Naive thymus-derived CD4-positive, alpha-beta T cell (primary cell): ENCODE measurements at regions of chr19 and their contacts with region 1.

Region 1: DNA sequence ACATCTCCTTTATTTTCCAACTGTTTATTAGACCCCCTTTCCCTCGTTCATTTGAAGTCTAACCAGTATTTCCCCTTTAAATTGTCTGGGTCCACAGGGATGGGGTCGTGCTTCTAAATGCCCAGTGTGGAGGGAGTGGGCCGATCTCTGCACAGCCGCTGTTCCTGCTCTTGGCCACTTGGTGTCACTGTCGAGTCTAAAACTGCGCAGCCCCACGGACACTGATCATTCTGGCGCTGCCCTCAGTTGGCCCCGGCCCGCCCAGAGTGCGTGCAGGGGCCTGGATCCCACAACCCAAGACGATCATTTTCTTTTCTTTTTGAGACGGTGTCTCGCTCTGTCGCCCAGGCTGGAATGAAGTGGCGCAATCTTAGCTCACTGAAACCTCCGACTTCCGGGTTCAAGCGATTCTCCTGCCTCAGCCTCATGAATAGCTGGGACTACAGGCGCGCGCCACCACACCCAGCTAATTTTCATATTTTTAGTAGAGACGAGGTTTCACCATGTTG is 12.0 kb downstream of the WDR88 start:
- DNase-seq: peak; percentile 21 to 68 (median 49)
- ATAC-seq: peak; percentile 98
- H3K4me3 ChIP-seq: no peak overlapping the region
- H3K4me3 Mint-ChIP-seq: peak overlapping the region in 6 of 10 donors; percentile 0 to 58 (median 30)
- H3K27ac ChIP-seq: no peak overlapping the region
- H3K27ac Mint-ChIP-seq: no peak overlapping the region
- H3K4me1 ChIP-seq: no peaks in the 10 kb centered on the region
- H3K4me1 Mint-ChIP-seq: peaks cover 4 to 9% (median 8%) of the 10 kb centered on the region in 7 donors
- H3K27me3 ChIP-seq: no peaks in the 10 kb centered on the region
- H3K27me3 Mint-ChIP-seq: peaks cover 0 to 8% (median 3%) of the 10 kb centered on the region in 5 donors

Region 2: GRCh38 chr19:33005420-33005819 is 138.5 kb before region 1 on chr19:
- CTCF ChIA-PET with region 1: no interaction called
- POLR2A ChIA-PET with region 1: no interaction called
- intact Hi-C with region 1: no loop called
- DNase-seq: no peak
- ATAC-seq: no peak
- H3K4me3 ChIP-seq: no peak overlapping the region
- H3K4me3 Mint-ChIP-seq: no peak overlapping the region
- H3K27ac ChIP-seq: no peak overlapping the region
- H3K27ac Mint-ChIP-seq: no peak overlapping the region
- H3K4me1 ChIP-seq: peaks cover 0 to 3% of the 10 kb centered on the region in 2 donors
- H3K4me1 Mint-ChIP-seq: peaks cover 5 to 6% (median 5%) of the 10 kb centered on the region in 7 donors
- H3K27me3 ChIP-seq: no peaks in the 10 kb centered on the region
- H3K27me3 Mint-ChIP-seq: no peaks in the 10 kb centered on the region

Region 3: DNA sequence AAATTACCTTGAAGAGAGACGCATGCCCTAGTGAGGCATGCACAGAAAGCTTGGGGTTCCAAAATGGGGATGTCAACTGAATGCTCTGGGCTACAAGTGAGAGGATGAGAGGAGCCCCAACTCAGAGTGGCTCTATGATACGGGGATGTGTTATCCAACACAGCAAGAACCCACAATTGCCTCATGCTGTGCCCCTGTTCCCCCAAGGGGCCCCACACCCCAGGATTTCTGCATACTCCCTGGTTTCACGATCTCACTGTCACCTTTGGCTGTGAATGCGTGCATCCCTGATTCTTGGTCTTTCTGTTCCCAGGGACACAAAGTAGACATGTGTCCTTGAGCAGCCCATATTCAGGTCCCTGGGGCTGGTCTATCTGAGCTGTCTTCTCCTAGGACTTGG is 17.2 kb after region 1 on chr19:
- CTCF ChIA-PET with region 1: interaction called, 13 read pairs
- POLR2A ChIA-PET with region 1: no interaction called
- intact Hi-C with region 1: no loop called
- DNase-seq: no peak
- ATAC-seq: no peak
- H3K4me3 ChIP-seq: no peak overlapping the region
- H3K4me3 Mint-ChIP-seq: peak overlapping the region in 7 of 10 donors; percentile 13 to 74 (median 63)
- H3K27ac ChIP-seq: no peak overlapping the region
- H3K27ac Mint-ChIP-seq: peak overlapping the region in 8 of 9 donors; percentile 43 to 95 (median 88)
- H3K4me1 ChIP-seq: peaks cover 26% of the 10 kb centered on the region in 2 donors
- H3K4me1 Mint-ChIP-seq: peaks cover 31 to 44% (median 40%) of the 10 kb centered on the region in 7 donors
- H3K27me3 ChIP-seq: no peaks in the 10 kb centered on the region
- H3K27me3 Mint-ChIP-seq: no peaks in the 10 kb centered on the region

Region 4: DNA sequence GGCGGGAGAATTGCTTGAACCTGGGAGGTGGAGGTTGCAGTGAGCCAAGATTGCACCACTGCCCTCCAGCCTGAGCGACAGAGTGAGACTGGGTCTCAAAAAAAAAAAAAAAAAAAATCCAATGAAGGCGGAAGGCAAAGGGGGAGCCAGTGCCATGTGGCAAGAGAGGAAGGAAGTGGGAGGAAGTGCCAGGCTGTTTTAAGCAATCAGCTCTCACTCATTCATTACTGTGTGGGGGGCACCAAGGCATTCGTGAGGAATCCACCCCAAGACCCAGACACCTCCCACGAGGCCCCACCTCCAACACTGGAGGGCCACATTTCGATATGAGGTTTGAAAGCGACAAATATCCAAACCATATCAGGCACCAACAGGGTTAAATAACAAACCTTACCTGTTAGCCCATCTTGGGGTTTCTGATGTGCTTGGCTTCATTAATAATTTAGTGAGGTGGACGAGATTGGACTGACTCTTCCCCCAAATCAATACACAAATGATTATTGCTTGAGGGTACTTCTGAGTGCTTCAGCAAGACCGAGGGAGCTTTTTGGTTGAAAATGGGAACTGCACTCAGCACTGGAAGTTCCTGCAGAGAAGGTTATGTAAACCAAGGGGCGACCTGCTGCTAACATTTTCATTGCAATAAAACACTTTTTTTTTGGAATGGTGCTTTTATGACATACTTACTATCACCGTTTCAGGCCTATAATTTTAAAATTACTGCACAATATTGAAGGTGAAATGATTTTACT is 42.7 kb after region 1 on chr19:
- CTCF ChIA-PET with region 1: interaction called, 21 read pairs
- POLR2A ChIA-PET with region 1: interaction called, 3 read pairs
- intact Hi-C with region 1: loop called (anchors 1 kb)
- DNase-seq: no peak
- ATAC-seq: peak; percentile 37
- H3K4me3 ChIP-seq: no peak overlapping the region
- H3K4me3 Mint-ChIP-seq: peak overlapping the region in 4 of 10 donors; percentile 6 to 69 (median 31)
- H3K27ac ChIP-seq: no peak overlapping the region
- H3K27ac Mint-ChIP-seq: no peak overlapping the region
- H3K4me1 ChIP-seq: peaks cover 0 to 6% of the 10 kb centered on the region in 2 donors
- H3K4me1 Mint-ChIP-seq: peaks cover 0 to 11% (median 9%) of the 10 kb centered on the region in 7 donors
- H3K27me3 ChIP-seq: no peaks in the 10 kb centered on the region
- H3K27me3 Mint-ChIP-seq: peaks cover under 1 to 16% (median 6%) of the 10 kb centered on the region in 5 donors

Region 5: DNA sequence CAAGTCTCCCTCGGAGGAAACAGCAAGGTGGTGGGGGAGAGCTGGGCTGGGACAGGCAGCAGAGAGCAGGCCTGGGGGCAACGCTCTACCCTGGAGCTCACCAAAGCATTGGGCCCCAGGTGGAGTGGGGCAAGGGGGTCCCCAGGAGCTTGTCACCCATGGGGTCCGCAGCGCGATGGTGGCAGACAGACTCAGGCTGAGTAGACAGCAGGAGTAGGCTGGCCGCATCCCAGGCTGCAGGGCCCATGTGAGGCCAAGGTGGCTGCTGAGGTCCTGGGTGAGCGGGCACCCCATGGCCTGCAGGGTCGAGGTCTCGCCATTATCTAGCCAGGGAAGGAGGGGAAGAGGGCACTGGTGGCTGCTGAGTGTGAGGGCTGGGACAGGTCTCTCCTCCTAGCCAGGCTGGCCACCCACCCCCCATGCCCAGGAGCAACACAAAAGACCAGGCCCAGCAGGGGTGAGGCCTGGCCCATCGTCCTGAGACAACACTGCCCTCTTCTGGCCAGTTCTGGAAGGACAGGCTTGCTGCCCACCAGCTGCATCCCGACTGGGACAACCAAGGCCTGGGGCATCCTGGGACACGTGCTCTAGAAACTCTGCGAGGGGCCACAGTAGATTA is 262.7 kb after region 1 on chr19:
- CTCF ChIA-PET with region 1: interaction called, 4 read pairs
- POLR2A ChIA-PET with region 1: no interaction called
- intact Hi-C with region 1: loop called in 1 of 2 experiments (anchors 5 kb)
- DNase-seq: peak; percentile 37 to 80 (median 63)
- ATAC-seq: peak; percentile 86
- H3K4me3 ChIP-seq: no peak overlapping the region
- H3K4me3 Mint-ChIP-seq: no peak overlapping the region
- H3K27ac ChIP-seq: no peak overlapping the region
- H3K27ac Mint-ChIP-seq: no peak overlapping the region
- H3K4me1 ChIP-seq: no peaks in the 10 kb centered on the region
- H3K4me1 Mint-ChIP-seq: peaks cover 0 to 3% (median 0%) of the 10 kb centered on the region in 7 donors
- H3K27me3 ChIP-seq: no peaks in the 10 kb centered on the region
- H3K27me3 Mint-ChIP-seq: no peaks in the 10 kb centered on the region